Right lobe of liver (tissue), 6 donors: ENCODE measurements at regions of chr2 and their contacts with region 1.

Region 1: DNA sequence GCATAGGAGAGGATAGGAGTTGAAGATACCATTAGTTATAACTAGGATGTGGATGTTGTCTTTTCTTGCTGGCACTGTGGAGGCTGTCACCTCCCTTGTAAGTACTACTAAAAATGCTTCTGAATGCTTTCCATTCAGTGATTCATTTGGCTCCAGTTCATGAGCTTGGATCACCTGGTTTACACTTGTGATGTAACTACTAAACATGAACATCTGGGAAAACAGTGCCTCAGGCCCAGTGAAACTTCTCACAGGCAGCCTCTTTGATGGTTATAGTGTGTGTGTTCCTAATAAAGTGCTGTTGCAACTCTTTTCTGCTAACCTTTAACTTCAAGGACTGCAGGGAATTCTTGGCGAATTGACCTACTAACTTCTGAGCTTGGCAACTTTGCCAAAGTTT is 13.0 kb upstream of the SLC9A2 start:
- DNase-seq: no peak
- ATAC-seq: no peak
- H3K4me3 ChIP-seq: no peak overlapping the region
- H3K27ac ChIP-seq: no peak overlapping the region
- H3K4me1 ChIP-seq: no peaks in the 10 kb centered on the region
- H3K27me3 ChIP-seq: no peaks in the 10 kb centered on the region
- CTCF ChIP-seq: no peak
- POLR2A ChIP-seq: no peak

Region 2: DNA sequence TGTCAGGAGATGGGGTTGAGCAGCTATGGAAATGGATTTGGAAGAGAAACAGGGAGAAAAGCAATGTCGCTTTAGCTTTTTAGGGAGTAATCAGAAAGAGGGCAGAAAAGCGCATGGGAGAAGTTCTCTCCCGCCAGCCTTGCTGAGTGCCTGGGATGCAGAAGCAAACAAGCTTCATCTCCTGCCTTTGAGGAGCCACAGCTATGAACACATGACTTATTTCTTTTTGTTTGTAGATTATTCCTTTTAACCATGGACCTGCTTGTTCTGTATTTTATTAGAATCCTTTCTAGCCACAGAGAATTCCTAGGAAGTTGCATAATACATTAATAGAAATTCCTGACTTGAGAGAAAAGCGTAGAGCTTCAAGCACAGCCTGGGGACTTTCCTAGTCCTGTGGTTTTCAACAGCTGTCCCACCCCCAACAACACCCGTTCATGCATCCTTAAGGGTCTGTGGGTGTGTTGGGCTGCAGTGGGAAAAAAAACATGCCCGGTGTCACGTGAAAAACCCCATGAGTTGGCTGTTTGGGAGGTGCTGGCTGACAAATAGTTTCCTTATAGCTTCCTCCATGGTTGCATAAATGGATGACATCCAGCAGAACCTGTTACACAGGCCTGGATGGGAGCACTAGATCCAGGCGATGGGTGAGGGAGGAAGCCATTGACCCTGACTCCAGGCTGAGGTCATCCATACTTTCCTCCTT is 118.4 kb before region 1 on chr2:
- intact Hi-C with region 1: loop called in 1 of 2 experiments (anchors 10 kb)
- DNase-seq: no peak
- ATAC-seq: no peak
- H3K4me3 ChIP-seq: no peak overlapping the region
- H3K27ac ChIP-seq: no peak overlapping the region
- H3K4me1 ChIP-seq: no peaks in the 10 kb centered on the region
- H3K27me3 ChIP-seq: no peaks in the 10 kb centered on the region
- CTCF ChIP-seq: no peak
- POLR2A ChIP-seq: no peak

Region 3: GRCh38 chr2:103208916-103209315 is 602.6 kb after region 1 on chr2:
- intact Hi-C with region 1: no loop called
- DNase-seq: no peak
- ATAC-seq: no peak
- H3K4me3 ChIP-seq: no peak overlapping the region
- H3K27ac ChIP-seq: no peak overlapping the region
- H3K4me1 ChIP-seq: no peaks in the 10 kb centered on the region
- H3K27me3 ChIP-seq: no peaks in the 10 kb centered on the region
- CTCF ChIP-seq: no peak
- POLR2A ChIP-seq: no peak